ENCODE measurements at regions of chr9 and their contacts with region 1.

Region 1: GRCh38 chr9:137672907-137673791 is 54.3 kb downstream of the EHMT1 start:
- DNase-seq: peak; percentile 85
- H3K4me3 ChIP-seq: no peak overlapping the region; a peak in 1 of 4 replicates
- H3K27ac ChIP-seq: peak overlapping the region in 1 of 2 experiments; percentile 78; a peak in 2 of 4 replicates
- H3K4me1 ChIP-seq: peaks cover 4 to 23% of the 10 kb centered on the region in 2 experiments; a peak in 3 of 4 replicates
- H3K27me3 ChIP-seq: no peaks in the 10 kb centered on the region
- CTCF ChIP-seq: peak; percentile 90
- EP300 ChIP-seq: no peak
- RAD21 ChIP-seq: peak; percentile 92

Region 2: DNA sequence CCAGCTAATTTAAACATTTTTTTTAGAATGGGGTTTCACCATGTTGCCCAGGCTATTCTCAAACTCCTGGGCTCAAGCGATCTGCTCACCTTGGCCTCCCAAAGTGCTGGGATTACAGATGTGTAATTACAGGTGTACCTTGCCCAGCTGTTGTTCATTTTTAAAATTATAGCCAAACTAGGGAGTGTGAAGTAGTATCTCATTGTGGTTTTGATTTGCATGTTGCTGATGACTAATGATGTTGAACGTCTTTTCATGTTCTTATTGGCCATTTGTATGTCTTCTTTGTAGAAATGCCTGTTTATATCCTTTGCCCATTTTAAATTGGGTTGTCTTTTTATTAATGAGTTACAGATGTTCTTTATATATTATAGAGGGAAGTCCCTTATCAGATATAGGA is 22.9 kb before region 1 on chr9:
- CTCF ChIA-PET with region 1: no interaction called
- POLR2A ChIA-PET with region 1: no interaction called
- DNase-seq: no peak
- H3K4me3 ChIP-seq: no peak overlapping the region
- H3K27ac ChIP-seq: no peak overlapping the region
- H3K4me1 ChIP-seq: no peaks in the 10 kb centered on the region; a peak in 1 of 4 replicates
- H3K27me3 ChIP-seq: no peaks in the 10 kb centered on the region
- CTCF ChIP-seq: no peak
- EP300 ChIP-seq: no peak
- RAD21 ChIP-seq: no peak

Region 3: GRCh38 chr9:137694967-137695879 is 22.1 kb after region 1 on chr9:
- CTCF ChIA-PET with region 1: interaction called, 35 read pairs
- POLR2A ChIA-PET with region 1: no interaction called
- DNase-seq: peak; percentile 79
- H3K4me3 ChIP-seq: no peak overlapping the region
- H3K27ac ChIP-seq: no peak overlapping the region
- H3K4me1 ChIP-seq: peaks cover 0 to 19% of the 10 kb centered on the region in 2 experiments; a peak in 1 of 4 replicates
- H3K27me3 ChIP-seq: no peaks in the 10 kb centered on the region
- CTCF ChIP-seq: peak; percentile 55
- EP300 ChIP-seq: no peak
- RAD21 ChIP-seq: peak; percentile 53

Region 4: GRCh38 chr9:137710704-137711103 is 37.6 kb after region 1 on chr9:
- CTCF ChIA-PET with region 1: interaction called, 17 read pairs
- POLR2A ChIA-PET with region 1: no interaction called
- DNase-seq: no peak
- H3K4me3 ChIP-seq: no peak overlapping the region
- H3K27ac ChIP-seq: no peak overlapping the region
- H3K4me1 ChIP-seq: peaks cover 0 to 23% of the 10 kb centered on the region in 2 experiments; a peak in 2 of 4 replicates
- H3K27me3 ChIP-seq: no peaks in the 10 kb centered on the region
- CTCF ChIP-seq: no peak
- EP300 ChIP-seq: no peak
- RAD21 ChIP-seq: no peak

Region 5: GRCh38 chr9:137740312-137740711 is 67.2 kb after region 1 on chr9:
- CTCF ChIA-PET with region 1: interaction called, 23 read pairs
- POLR2A ChIA-PET with region 1: interaction called, 3 read pairs
- DNase-seq: peak; percentile 90
- H3K4me3 ChIP-seq: no peak overlapping the region
- H3K27ac ChIP-seq: peak overlapping the region in 1 of 2 experiments; percentile 79; a peak in 2 of 4 replicates
- H3K4me1 ChIP-seq: peaks cover 0 to 36% of the 10 kb centered on the region in 2 experiments; a peak in 1 of 4 replicates
- H3K27me3 ChIP-seq: no peaks in the 10 kb centered on the region
- CTCF ChIP-seq: 0 out of 2 replicates have a peak, but pooled peaks have one; percentile 7
- EP300 ChIP-seq: no peak; a peak in 1 of 4 replicates
- RAD21 ChIP-seq: peak; percentile 40

Region 6: DNA sequence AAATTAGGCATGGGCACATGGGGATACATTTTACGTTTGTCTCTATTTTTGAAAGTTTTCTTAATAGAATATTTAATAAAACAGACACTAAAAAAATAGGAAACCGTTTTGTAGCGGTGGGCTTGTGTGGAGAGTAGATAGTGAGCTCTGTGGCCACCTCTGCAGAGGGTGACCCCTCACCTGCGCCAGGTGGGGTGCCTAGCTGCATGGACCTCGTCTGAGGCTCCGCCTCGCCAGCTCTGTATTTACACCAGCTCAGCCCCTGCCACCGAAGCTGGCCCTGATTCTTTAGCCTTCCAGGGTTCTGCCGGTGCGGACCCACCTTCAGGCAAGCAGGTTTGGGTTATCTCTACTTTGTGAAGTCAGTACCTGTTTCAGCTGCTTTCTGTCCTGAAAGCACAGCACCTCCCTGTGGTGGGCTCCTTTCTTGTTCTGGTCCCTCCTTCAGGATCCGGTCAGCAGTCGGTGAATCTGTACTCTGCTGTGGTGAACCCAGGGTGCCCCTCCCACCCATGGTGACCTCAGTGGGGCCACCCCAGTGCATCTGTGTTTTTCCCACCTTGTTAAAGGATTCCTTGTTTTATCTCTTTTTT is 99.2 kb after region 1 on chr9:
- CTCF ChIA-PET with region 1: interaction called, 10 read pairs
- POLR2A ChIA-PET with region 1: no interaction called
- DNase-seq: no peak
- H3K4me3 ChIP-seq: no peak overlapping the region
- H3K27ac ChIP-seq: no peak overlapping the region
- H3K4me1 ChIP-seq: no peaks in the 10 kb centered on the region
- H3K27me3 ChIP-seq: no peaks in the 10 kb centered on the region
- CTCF ChIP-seq: 0 out of 2 replicates have a peak, but pooled peaks have one; percentile 14
- EP300 ChIP-seq: no peak
- RAD21 ChIP-seq: peak; percentile 24; the same call in 1 of the 2 replicates

Region 7: GRCh38 chr9:138096192-138096845 is 423.2 kb after region 1 on chr9:
- CTCF ChIA-PET with region 1: no interaction called
- POLR2A ChIA-PET with region 1: no interaction called
- DNase-seq: no peak
- H3K4me3 ChIP-seq: no peak overlapping the region
- H3K27ac ChIP-seq: no peak overlapping the region
- H3K4me1 ChIP-seq: peaks cover 0 to 9% of the 10 kb centered on the region in 2 experiments; a peak in 1 of 4 replicates
- H3K27me3 ChIP-seq: no peaks in the 10 kb centered on the region
- CTCF ChIP-seq: no peak
- EP300 ChIP-seq: no peak
- RAD21 ChIP-seq: no peak

Measured in SK-N-SH (cell line).